HepG2 (cell line): ENCODE measurements at regions of chr16 and their contacts with region 1.

Region 1: GRCh38 chr16:74998481-74999218 is at the start of gene ZNRF1:
- DNase-seq: peak; percentile 82
- ATAC-seq: peak; percentile 73
- H3K4me3 ChIP-seq: peak within 1 kb of the TSS; percentile 76 to 94 (median 80)
- H3K27ac ChIP-seq: peak within 1 kb of the TSS; percentile 91
- H3K4me1 ChIP-seq: peaks cover 75% of the 10 kb centered on the region
- H3K27me3 ChIP-seq: no peaks in the 10 kb centered on the region; a peak in 1 of 5 replicates
- CTCF ChIP-seq: peak; percentile 85
- EP300 ChIP-seq: peak in 1 of 2 experiments; percentile 43; a peak in 2 of 4 replicates
- POLR2A ChIP-seq: peak; percentile 50 to 51; a peak in 2 of 4 replicates
- RAD21 ChIP-seq: peak; percentile 62
- total RNA-seq, gene ZNRF1: 32.3 and 43.9 TPM in 2 replicates

Region 2: GRCh38 chr16:74123826-74124225 is 874.8 kb before region 1 on chr16:
- CTCF ChIA-PET with region 1: no interaction called
- POLR2A ChIA-PET with region 1: no interaction called
- in situ Hi-C with region 1: no loop called
- intact Hi-C with region 1: no loop called
- DNase-seq: no peak
- ATAC-seq: no peak
- H3K4me3 ChIP-seq: no peak overlapping the region
- H3K27ac ChIP-seq: no peak overlapping the region
- H3K4me1 ChIP-seq: no peaks in the 10 kb centered on the region
- H3K27me3 ChIP-seq: no peaks in the 10 kb centered on the region
- CTCF ChIP-seq: no peak
- EP300 ChIP-seq: no peak
- POLR2A ChIP-seq: no peak
- RAD21 ChIP-seq: no peak

Region 3: DNA sequence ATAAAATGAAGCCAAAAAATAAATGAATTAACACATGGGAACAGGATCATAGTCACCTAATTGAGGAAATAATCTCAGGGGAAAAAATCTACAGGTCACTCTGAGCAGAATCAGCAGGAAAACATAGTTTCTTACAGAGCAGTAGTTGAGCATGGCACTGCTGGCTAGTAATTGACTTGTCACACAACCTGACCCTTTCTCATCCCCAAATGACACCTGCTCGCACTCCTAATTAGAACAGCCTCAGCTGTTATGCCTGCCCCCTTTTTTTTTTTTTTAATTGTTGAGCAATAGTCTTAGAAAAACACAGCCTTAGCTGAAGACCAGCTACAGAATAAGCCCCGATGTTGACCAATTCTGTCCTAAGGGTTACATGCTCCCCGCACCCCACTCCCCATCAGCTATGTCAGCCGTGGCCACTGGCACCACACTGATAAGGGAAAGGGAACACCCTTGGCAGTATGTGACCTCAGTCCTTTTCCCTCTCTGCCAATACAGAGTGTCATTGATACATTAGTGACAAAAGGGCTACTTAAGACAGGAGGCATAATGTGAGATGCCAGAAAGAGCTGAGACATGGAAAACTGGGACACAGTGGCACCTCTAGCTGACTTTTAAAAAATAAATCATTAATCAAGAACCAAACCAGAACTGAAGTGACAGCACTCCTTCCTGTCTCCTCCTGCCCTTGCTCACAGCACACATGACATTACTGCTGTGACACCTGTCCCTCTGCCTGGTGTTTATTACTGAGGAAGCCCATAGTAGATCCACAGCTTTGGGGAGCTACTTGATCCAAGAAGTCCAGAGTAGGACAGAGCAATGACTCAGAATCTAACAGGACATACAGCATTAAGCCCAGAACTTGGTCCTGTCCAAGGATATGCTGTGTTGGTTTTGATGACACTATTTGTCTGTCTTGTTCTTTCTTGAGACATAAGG is 55.4 kb before region 1 on chr16:
- CTCF ChIA-PET with region 1: no interaction called
- POLR2A ChIA-PET with region 1: no interaction called
- in situ Hi-C with region 1: no loop called
- intact Hi-C with region 1: no loop called
- DNase-seq: no peak
- ATAC-seq: no peak
- H3K4me3 ChIP-seq: no peak overlapping the region
- H3K27ac ChIP-seq: no peak overlapping the region
- H3K4me1 ChIP-seq: peaks cover 5% of the 10 kb centered on the region
- H3K27me3 ChIP-seq: no peaks in the 10 kb centered on the region
- CTCF ChIP-seq: no peak
- EP300 ChIP-seq: no peak
- POLR2A ChIP-seq: no peak
- RAD21 ChIP-seq: no peak

Region 4: DNA sequence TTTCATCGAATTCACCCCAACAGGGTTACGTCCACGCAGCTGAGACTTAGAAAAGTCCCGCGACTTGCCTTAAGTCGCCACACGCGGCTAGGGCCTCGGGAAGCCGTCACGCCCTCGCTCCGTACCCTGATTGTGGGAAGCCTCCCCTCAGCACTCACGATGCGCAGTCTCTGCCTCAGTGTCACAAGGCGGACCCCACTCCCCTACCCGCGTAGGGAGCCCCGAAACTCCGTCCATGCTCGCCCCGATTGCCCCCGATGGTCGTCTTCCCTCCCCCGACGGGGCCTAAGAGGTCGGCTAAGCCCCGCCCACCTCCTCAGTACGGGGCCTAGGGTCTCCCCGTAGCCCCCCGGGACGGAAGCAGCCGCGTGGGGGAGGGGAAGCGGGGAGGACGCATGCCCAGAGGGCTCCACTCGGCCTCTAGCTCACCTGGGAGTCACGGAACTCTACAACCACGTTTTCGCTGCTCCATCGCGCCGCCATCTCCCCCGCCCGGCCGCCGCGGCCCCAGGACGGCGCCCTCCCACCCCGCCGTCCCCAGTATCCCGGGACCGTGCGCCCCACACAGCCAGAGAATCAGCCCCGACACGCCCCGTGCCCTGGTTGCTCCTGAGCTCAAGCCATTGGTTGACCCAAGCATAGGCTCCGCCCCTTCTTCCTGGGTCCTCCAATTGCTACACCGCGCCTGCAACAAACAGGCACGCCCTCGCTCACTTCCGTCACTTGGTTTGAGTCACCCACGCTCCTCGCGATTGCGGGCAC is 13.9 kb before region 1 on chr16 and contains the start of gene WDR59:
- CTCF ChIA-PET with region 1: no interaction called
- POLR2A ChIA-PET with region 1: interaction called, 47 read pairs
- in situ Hi-C with region 1: no loop called
- intact Hi-C with region 1: no loop called
- DNase-seq: peak; percentile 100
- ATAC-seq: peak; percentile 99
- H3K4me3 ChIP-seq: peak within 1 kb of the TSS; percentile 85 to 99 (median 89)
- H3K27ac ChIP-seq: peak within 1 kb of the TSS; percentile 75
- H3K4me1 ChIP-seq: peaks cover 69% of the 10 kb centered on the region
- H3K27me3 ChIP-seq: no peaks in the 10 kb centered on the region; a peak in 1 of 5 replicates
- CTCF ChIP-seq: peak; percentile 24; the same call in 1 of the 2 replicates
- EP300 ChIP-seq: 0 out of 4 replicates have a peak, but pooled peaks have one; percentile 16 to 63
- POLR2A ChIP-seq: peak; percentile 86 to 90
- RAD21 ChIP-seq: peak; percentile 56; the same call in 1 of the 2 replicates
- total RNA-seq, gene WDR59: 59.6 and 65.2 TPM in 2 replicates

Region 5: DNA sequence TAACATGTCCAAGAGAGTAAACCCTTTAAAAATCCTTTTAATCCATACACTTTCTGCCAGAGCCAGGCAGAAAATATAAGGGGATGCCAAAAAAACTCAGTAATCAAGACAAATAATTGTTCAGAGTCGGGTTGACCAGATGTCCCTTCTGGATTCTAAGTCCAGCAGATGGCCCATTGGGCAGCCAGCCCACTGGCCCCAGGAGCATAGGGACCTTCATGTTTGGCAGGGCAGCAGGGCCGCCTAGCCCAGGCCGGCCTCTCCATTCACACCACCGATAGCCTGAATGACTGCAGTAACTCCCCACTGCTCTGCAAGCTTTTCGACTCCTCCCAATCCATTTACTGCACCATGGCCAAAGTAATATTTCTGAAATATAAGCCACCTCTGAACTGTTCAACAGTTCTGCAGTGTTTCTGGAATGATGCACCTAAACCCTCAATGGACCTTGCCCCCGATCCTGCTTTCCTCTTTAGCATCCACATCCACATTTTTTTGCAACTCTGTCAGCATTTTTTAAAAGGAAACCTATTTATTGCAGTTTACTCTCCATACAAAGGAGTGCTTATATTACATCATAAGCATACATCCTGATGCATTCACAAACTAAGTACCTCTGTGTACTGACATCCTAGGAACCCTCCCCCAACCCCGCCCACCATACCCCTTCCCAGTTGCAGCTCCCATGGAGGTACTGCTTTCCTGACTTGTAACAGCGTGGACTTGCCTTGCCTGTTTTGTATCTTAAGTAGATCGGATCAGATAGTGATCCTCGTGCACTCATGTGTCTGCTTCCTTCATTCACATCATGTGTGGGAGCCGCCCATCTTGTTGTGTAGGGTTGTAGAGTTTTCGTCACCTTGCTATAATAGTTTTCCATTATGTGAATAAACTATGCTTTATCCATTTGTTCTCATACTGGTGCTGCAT is 71.6 kb after region 1 on chr16:
- CTCF ChIA-PET with region 1: no interaction called
- POLR2A ChIA-PET with region 1: no interaction called
- in situ Hi-C with region 1: no loop called
- intact Hi-C with region 1: loop called (anchors 1 kb)
- DNase-seq: peak; percentile 98
- ATAC-seq: peak; percentile 92
- H3K4me3 ChIP-seq: peak overlapping the region in 2 of 3 experiments; percentile 41 to 50; a peak in 3 of 6 replicates
- H3K27ac ChIP-seq: peak overlapping the region; percentile 79
- H3K4me1 ChIP-seq: peaks cover 75% of the 10 kb centered on the region
- H3K27me3 ChIP-seq: no peaks in the 10 kb centered on the region
- CTCF ChIP-seq: no peak
- EP300 ChIP-seq: peak; percentile 77 to 79; a peak in 3 of 4 replicates
- POLR2A ChIP-seq: no peak; a peak in 1 of 4 replicates
- RAD21 ChIP-seq: no peak

Region 6: GRCh38 chr16:75116081-75116910 is 117.6 kb after region 1 on chr16 and contains the start of gene LDHD:
- CTCF ChIA-PET with region 1: interaction called, 11 read pairs
- POLR2A ChIA-PET with region 1: interaction called, 30 read pairs
- in situ Hi-C with region 1: no loop called
- intact Hi-C with region 1: loop called (anchors 1 kb)
- DNase-seq: peak; percentile 86
- ATAC-seq: peak; percentile 93
- H3K4me3 ChIP-seq: peak within 1 kb of the TSS; percentile 56 to 83 (median 59)
- H3K27ac ChIP-seq: peak within 1 kb of the TSS; percentile 48
- H3K4me1 ChIP-seq: peaks cover 78% of the 10 kb centered on the region
- H3K27me3 ChIP-seq: no peaks in the 10 kb centered on the region; a peak in 1 of 5 replicates
- CTCF ChIP-seq: peak; percentile 49; the same call in 1 of the 2 replicates
- EP300 ChIP-seq: peak; percentile 51 to 52; a peak in 2 of 4 replicates
- POLR2A ChIP-seq: peak; percentile 90 to 96
- RAD21 ChIP-seq: no peak; the same call in 1 of the 2 replicates
- total RNA-seq, gene LDHD: 9.1 and 9.3 TPM in 2 replicates

Region 7: GRCh38 chr16:75244844-75245758 is 246.5 kb after region 1 on chr16:
- CTCF ChIA-PET with region 1: no interaction called
- POLR2A ChIA-PET with region 1: no interaction called
- in situ Hi-C with region 1: no loop called
- intact Hi-C with region 1: loop called (anchors 5 kb)
- DNase-seq: peak; percentile 99
- ATAC-seq: peak; percentile 80
- H3K4me3 ChIP-seq: peak overlapping the region; percentile 11 to 63 (median 25); a peak in 5 of 6 replicates
- H3K27ac ChIP-seq: peak overlapping the region; percentile 97
- H3K4me1 ChIP-seq: peaks cover 85% of the 10 kb centered on the region
- H3K27me3 ChIP-seq: no peaks in the 10 kb centered on the region
- CTCF ChIP-seq: peak; percentile 32
- EP300 ChIP-seq: peak in 1 of 2 experiments; percentile 96
- POLR2A ChIP-seq: peak in 1 of 2 experiments; percentile 91; a peak in 2 of 4 replicates
- RAD21 ChIP-seq: peak; percentile 73